Activated B cell treated with CpG ODN at 0.5 μM for 24 hours (primary cell): ENCODE measurements at regions of chr20 and their contacts with region 1.

Region 1: DNA sequence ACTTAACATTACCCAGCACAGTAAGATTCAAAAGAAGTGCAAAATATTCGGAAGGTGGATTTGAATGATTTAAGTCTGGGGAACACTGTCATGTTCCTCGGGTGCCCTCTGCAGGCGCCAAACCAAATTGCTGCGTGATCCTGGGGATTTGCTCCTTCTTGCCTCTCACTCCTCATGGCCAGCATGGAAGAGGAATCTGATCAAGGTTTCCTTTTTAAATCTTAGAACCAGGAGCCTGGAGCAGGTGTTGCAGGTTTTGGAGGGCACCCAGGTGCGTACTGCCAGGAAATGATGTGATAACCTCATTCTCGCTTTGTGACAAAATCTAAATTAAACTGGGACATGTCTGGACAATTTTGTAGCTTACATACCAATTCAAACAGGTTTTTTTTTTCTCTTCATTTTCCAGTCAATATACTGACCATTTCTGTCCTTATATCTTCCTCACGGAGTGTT is 8.1 kb upstream of the PFDN4 start:
- DNase-seq: peak; percentile 61
- ATAC-seq: peak; percentile 66
- H3K4me3 Mint-ChIP-seq: no peak overlapping the region
- H3K27ac Mint-ChIP-seq: no peak overlapping the region
- H3K4me1 Mint-ChIP-seq: peaks cover 6% of the 10 kb centered on the region
- H3K27me3 Mint-ChIP-seq: peaks cover 2% of the 10 kb centered on the region
- CTCF ChIP-seq: peak; percentile 83

Region 2: DNA sequence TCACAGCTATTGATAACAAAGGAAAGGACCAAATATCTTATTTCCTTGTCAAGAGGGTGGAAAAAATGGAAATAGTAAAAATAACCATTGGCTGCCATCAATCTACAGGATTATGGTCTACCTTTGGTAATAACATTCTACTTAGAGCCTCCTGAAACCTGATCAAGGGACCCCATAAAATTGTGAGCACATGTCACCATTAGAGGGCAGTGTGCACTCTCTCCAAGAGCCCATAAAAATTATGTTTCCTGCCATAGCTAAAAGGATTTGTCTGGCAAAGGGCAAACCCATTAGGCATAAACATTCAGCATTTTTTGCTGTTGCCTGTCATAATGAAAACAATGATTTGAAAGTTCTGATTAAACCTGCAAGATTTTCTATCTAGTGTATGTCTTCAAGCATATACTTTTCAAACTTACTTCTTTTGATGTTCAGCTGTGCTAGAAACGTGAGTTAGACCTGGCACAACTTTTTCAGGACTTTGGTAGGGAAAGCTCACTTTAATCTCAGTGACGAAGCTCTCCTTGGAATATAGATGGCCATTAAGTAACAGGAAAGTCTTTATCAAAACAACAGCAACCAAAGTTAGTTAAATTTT is 1887.5 kb before region 1 on chr20:
- CTCF ChIA-PET with region 1: interaction called, 22 read pairs
- POLR2A ChIA-PET with region 1: no interaction called
- intact Hi-C with region 1: loop called (anchors 1 kb)
- DNase-seq: no peak
- ATAC-seq: no peak
- H3K4me3 Mint-ChIP-seq: no peak overlapping the region
- H3K27ac Mint-ChIP-seq: no peak overlapping the region
- H3K4me1 Mint-ChIP-seq: no peaks in the 10 kb centered on the region
- H3K27me3 Mint-ChIP-seq: peaks cover 25% of the 10 kb centered on the region
- CTCF ChIP-seq: no peak

Region 3: GRCh38 chr20:53216856-53217576 is 982.7 kb before region 1 on chr20:
- CTCF ChIA-PET with region 1: no interaction called
- POLR2A ChIA-PET with region 1: no interaction called
- intact Hi-C with region 1: loop called (anchors 5 kb)
- DNase-seq: peak; percentile 67
- ATAC-seq: peak; percentile 78
- H3K4me3 Mint-ChIP-seq: peak overlapping the region; percentile 41
- H3K27ac Mint-ChIP-seq: no peak overlapping the region
- H3K4me1 Mint-ChIP-seq: peaks cover 12% of the 10 kb centered on the region
- H3K27me3 Mint-ChIP-seq: peaks cover 12% of the 10 kb centered on the region
- CTCF ChIP-seq: peak; percentile 61

Region 4: GRCh38 chr20:53578492-53579222 is 621.1 kb before region 1 on chr20:
- CTCF ChIA-PET with region 1: no interaction called
- POLR2A ChIA-PET with region 1: no interaction called
- intact Hi-C with region 1: loop called (anchors 1 kb)
- DNase-seq: no peak
- ATAC-seq: peak; percentile 58
- H3K4me3 Mint-ChIP-seq: peak overlapping the region; percentile 32
- H3K27ac Mint-ChIP-seq: peak overlapping the region; percentile 88
- H3K4me1 Mint-ChIP-seq: peaks cover 56% of the 10 kb centered on the region
- H3K27me3 Mint-ChIP-seq: no peaks in the 10 kb centered on the region
- CTCF ChIP-seq: no peak

Region 5: GRCh38 chr20:54250691-54251090 is 50.9 kb after region 1 on chr20:
- CTCF ChIA-PET with region 1: no interaction called
- POLR2A ChIA-PET with region 1: no interaction called
- intact Hi-C with region 1: no loop called
- DNase-seq: no peak
- ATAC-seq: no peak
- H3K4me3 Mint-ChIP-seq: no peak overlapping the region
- H3K27ac Mint-ChIP-seq: no peak overlapping the region
- H3K4me1 Mint-ChIP-seq: no peaks in the 10 kb centered on the region
- H3K27me3 Mint-ChIP-seq: no peaks in the 10 kb centered on the region
- CTCF ChIP-seq: no peak